ENCODE measurements at regions of chr1 and their contacts with region 1.

Region 1: DNA sequence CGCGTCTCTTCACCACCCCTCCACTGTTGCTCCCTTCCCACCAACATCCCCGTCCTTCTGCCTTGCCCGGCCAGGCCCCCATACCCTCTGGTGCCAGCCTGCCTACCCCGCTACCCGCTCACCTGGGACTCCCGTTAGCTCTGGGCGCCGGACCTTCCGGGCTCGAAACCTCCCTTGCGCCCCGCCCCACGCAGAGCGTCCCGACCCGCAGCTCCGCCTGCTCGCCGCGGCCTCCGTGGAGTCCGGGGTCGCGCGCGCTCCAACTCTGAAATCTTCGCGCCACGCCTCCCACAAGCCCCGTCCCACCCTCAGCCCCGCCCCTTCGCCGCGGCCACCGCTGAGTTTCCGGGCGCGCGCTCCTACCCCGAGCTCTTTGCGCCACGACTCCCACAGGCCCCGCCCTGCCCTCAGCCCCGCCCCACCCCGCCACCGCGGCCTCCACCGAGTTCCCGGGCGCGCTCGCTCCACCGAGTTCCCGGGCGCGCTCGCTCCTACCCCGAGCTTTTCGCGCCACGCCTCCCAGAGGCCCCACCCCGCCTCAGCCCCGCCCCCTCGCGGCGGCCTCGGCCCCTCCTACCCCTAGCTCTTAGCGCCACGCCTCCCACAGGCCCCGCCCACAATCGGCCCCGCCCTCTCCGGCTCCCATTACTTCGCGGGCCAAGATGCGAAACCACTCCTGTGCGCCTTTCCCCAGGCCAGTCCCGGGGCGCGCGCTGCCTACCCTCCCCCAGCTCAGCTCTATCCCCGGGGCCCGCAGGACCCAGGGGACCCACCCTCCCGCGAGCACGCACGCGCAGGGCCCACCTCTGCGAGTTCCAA is at the start of gene IFT25:
- DNase-seq: peak; percentile 98
- ATAC-seq: peak; percentile 79
- H3K4me3 ChIP-seq: peak within 1 kb of the TSS; percentile 65 to 95 (median 87)
- H3K4me3 Mint-ChIP-seq: peak within 1 kb of the TSS; percentile 99
- H3K27ac ChIP-seq: peak within 1 kb of the TSS; percentile 65 to 81
- H3K27ac Mint-ChIP-seq: peak within 1 kb of the TSS; percentile 96
- H3K4me1 ChIP-seq: peaks cover 16 to 20% of the 10 kb centered on the region in 2 donors
- H3K4me1 Mint-ChIP-seq: peaks cover 33% of the 10 kb centered on the region
- H3K27me3 ChIP-seq: no peaks in the 10 kb centered on the region
- H3K27me3 Mint-ChIP-seq: no peaks in the 10 kb centered on the region
- CTCF ChIP-seq: no peak
- total RNA-seq, gene IFT25: 45.7 and 48.1 TPM in 2 replicates

Region 2: GRCh38 chr1:53860967-53861411 is 84.7 kb before region 1 on chr1:
- CTCF ChIA-PET with region 1: interaction called, 180 read pairs
- POLR2A ChIA-PET with region 1: interaction called, 4 read pairs
- intact Hi-C with region 1: loop called (anchors 1 kb)
- DNase-seq: peak; percentile 70
- ATAC-seq: peak; percentile 62
- H3K4me3 ChIP-seq: no peak overlapping the region
- H3K4me3 Mint-ChIP-seq: no peak overlapping the region
- H3K27ac ChIP-seq: no peak overlapping the region
- H3K27ac Mint-ChIP-seq: no peak overlapping the region
- H3K4me1 ChIP-seq: peaks cover 10 to 15% of the 10 kb centered on the region in 2 donors
- H3K4me1 Mint-ChIP-seq: peaks cover 23% of the 10 kb centered on the region
- H3K27me3 ChIP-seq: no peaks in the 10 kb centered on the region
- H3K27me3 Mint-ChIP-seq: no peaks in the 10 kb centered on the region
- CTCF ChIP-seq: peak; percentile 90

Region 3: DNA sequence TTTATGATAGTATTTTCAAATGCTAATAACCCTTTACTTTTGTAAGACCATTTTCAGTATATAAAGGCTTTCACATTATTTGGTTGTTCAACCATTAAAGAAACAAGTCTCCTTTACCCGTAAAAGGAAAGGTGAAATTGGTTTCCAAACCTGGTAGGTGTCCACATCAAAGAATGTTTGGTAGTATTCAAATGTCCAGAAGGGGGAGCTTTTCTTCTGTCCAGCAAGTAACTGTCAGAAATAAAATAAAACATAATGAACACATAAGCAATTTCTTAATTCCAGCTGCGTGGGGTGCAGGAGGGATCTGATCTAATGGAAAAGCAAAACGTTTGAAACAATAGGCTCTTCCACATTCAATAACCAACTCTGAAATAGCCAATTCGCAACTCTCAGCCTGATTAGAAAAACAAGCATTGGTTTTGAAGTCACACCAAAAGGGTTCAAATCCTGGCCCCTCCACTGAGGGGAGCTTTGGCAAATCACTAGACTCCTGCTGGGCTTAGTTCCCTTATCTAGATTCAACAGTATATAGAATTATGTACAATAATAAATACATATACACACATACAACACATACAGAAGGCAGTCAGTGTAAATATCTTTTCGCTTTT is 67.0 kb before region 1 on chr1:
- CTCF ChIA-PET with region 1: interaction called, 36 read pairs
- POLR2A ChIA-PET with region 1: interaction called, 5 read pairs
- intact Hi-C with region 1: loop called (anchors 1 kb)
- DNase-seq: peak; percentile 44
- ATAC-seq: no peak
- H3K4me3 ChIP-seq: no peak overlapping the region
- H3K4me3 Mint-ChIP-seq: no peak overlapping the region
- H3K27ac ChIP-seq: no peak overlapping the region
- H3K27ac Mint-ChIP-seq: no peak overlapping the region
- H3K4me1 ChIP-seq: no peaks in the 10 kb centered on the region
- H3K4me1 Mint-ChIP-seq: no peaks in the 10 kb centered on the region
- H3K27me3 ChIP-seq: no peaks in the 10 kb centered on the region
- H3K27me3 Mint-ChIP-seq: no peaks in the 10 kb centered on the region
- CTCF ChIP-seq: peak; percentile 63

Region 4: DNA sequence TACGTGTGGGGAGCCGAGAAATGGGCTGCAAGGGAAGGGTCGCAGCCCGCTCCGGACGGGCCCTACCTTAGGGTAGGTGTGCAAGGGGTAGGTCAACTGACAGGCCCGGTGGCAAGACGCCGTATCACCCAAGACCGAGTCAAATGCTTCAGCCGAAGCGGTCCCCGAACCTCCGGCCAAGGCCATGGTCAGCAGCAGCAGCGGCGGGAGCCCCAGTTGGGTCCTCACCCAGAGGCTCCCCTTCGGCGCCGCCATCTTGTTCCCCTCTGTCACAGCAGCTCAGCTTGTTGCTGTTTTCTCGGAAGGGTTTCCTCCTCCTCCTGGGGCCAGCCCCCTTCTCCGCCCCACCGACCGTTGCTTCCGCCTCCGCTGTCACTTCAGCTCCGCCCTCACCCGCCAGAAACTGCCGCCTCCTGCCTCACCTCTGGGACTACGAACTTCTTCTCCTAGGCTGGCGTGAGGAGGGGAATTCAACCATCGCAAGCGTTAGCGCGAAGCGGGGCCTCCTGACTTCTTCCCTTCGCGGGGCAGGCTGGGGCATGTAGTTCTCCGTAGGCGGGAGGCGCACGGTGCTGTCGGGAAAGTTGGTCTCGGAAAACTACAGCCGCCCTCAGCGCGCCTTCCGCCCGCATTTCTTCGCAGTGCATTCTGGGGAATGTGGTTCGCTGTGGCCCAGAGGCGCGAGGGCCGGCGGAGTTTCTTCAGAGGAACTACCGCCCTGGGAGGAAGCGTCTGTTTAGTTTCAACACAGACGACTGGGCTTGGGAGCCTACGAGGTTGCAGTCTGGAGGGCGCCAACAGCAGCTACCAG is 107.5 kb after region 1 on chr1 and contains the starts of genes TCEANC2 and TMEM59:
- CTCF ChIA-PET with region 1: interaction called, 3 read pairs
- POLR2A ChIA-PET with region 1: interaction called, 9 read pairs
- intact Hi-C with region 1: loop called (anchors 1 kb)
- DNase-seq: peak; percentile 99
- ATAC-seq: peak; percentile 91
- H3K4me3 ChIP-seq: peak within 1 kb of the TSS; percentile 65 to 99 (median 93)
- H3K4me3 Mint-ChIP-seq: no peak within 1 kb of the TSS
- H3K27ac ChIP-seq: peak within 1 kb of the TSS; percentile 75 to 94
- H3K27ac Mint-ChIP-seq: peak within 1 kb of the TSS; percentile 60
- H3K4me1 ChIP-seq: peaks cover 36% of the 10 kb centered on the region in 2 donors
- H3K4me1 Mint-ChIP-seq: peaks cover 36% of the 10 kb centered on the region
- H3K27me3 ChIP-seq: no peaks in the 10 kb centered on the region
- H3K27me3 Mint-ChIP-seq: no peaks in the 10 kb centered on the region
- CTCF ChIP-seq: no peak
- total RNA-seq, gene TCEANC2: 13.5 and 15.9 TPM in 2 replicates
- total RNA-seq, gene TMEM59: 146 and 152 TPM in 2 replicates

Region 5: DNA sequence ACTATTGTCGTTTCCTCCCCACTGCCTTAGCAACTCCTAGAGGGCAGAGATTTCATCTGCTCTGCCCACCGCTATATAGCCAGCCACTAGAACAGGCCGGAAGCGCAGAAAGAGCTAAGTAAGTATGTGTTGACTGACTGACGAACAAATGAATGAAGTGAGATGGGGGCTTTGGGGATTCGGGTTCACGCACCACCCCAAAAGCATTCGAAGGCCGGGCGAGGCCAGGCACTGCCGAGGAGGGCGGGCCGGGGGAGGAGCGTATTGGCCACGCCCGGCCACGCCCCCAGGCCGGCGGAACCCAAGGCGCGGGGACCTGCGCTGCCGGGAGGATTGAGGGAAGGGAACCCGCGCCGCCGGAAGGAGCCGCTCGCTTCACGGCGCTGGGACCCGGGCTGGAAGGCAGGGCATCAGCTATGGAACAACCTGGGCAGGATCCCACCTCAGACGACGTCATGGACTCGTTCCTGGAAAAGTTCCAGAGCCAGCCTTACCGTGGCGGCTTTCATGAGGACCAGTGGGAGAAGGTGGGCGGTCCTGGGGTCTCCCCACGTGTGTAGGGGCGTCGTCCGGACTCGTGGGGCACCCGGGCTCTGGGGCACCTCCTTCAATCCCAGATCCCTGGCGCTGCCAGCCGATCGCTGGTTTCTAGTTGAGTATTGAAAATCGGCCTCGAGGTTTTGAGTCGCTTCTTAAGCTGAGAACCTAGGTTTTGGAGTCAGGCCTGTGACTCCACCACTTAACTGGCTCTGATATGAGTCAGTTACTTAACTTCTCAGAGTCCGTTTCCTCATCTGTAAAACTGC is 770.1 kb after region 1 on chr1 and contains the start of gene TTC4:
- CTCF ChIA-PET with region 1: no interaction called
- POLR2A ChIA-PET with region 1: no interaction called
- intact Hi-C with region 1: loop called (anchors 1 kb)
- DNase-seq: peak; percentile 91
- ATAC-seq: peak; percentile 99
- H3K4me3 ChIP-seq: peak within 1 kb of the TSS; percentile 81 to 92 (median 91)
- H3K4me3 Mint-ChIP-seq: peak within 1 kb of the TSS; percentile 87
- H3K27ac ChIP-seq: peak within 1 kb of the TSS; percentile 50 to 71
- H3K27ac Mint-ChIP-seq: peak within 1 kb of the TSS; percentile 83
- H3K4me1 ChIP-seq: peaks cover 16 to 17% of the 10 kb centered on the region in 2 donors
- H3K4me1 Mint-ChIP-seq: peaks cover 26% of the 10 kb centered on the region
- H3K27me3 ChIP-seq: no peaks in the 10 kb centered on the region
- H3K27me3 Mint-ChIP-seq: no peaks in the 10 kb centered on the region
- CTCF ChIP-seq: no peak
- total RNA-seq, gene TTC4: 19.9 and 23.9 TPM in 2 replicates

Region 6: GRCh38 chr1:54800899-54801759 is 855.5 kb after region 1 on chr1 and contains the start of gene TTC22:
- CTCF ChIA-PET with region 1: no interaction called
- POLR2A ChIA-PET with region 1: no interaction called
- intact Hi-C with region 1: loop called (anchors 5 kb)
- DNase-seq: peak; percentile 81
- ATAC-seq: peak; percentile 92
- H3K4me3 ChIP-seq: peak within 1 kb of the TSS; percentile 50 to 82 (median 75)
- H3K4me3 Mint-ChIP-seq: peak within 1 kb of the TSS; percentile 99
- H3K27ac ChIP-seq: peak within 1 kb of the TSS in 1 of 2 donors; percentile 55
- H3K27ac Mint-ChIP-seq: peak within 1 kb of the TSS; percentile 93
- H3K4me1 ChIP-seq: peaks cover 25 to 31% of the 10 kb centered on the region in 2 donors
- H3K4me1 Mint-ChIP-seq: peaks cover 32% of the 10 kb centered on the region
- H3K27me3 ChIP-seq: no peaks in the 10 kb centered on the region
- H3K27me3 Mint-ChIP-seq: no peaks in the 10 kb centered on the region
- CTCF ChIP-seq: peak; percentile 81
- total RNA-seq, gene TTC22: 10.4 and 10.9 TPM in 2 replicates

Measured in B cell (primary cell).